A549 (cell line): ENCODE measurements at regions of chr12 and their contacts with region 1.

Region 1: GRCh38 chr12:52295663-52296062 is 4.3 kb upstream of the KRT81 start:
- DNase-seq: no peak
- ATAC-seq: no peak
- H3K4me3 ChIP-seq: no peak overlapping the region
- H3K27ac ChIP-seq: peak overlapping the region in 1 of 2 experiments; percentile 19; a peak in 1 of 6 replicates
- H3K4me1 ChIP-seq: peaks cover 28% of the 10 kb centered on the region
- CTCF ChIP-seq: no peak
- EP300 ChIP-seq: no peak
- POLR2A ChIP-seq: no peak
- RAD21 ChIP-seq: no peak

Region 2: DNA sequence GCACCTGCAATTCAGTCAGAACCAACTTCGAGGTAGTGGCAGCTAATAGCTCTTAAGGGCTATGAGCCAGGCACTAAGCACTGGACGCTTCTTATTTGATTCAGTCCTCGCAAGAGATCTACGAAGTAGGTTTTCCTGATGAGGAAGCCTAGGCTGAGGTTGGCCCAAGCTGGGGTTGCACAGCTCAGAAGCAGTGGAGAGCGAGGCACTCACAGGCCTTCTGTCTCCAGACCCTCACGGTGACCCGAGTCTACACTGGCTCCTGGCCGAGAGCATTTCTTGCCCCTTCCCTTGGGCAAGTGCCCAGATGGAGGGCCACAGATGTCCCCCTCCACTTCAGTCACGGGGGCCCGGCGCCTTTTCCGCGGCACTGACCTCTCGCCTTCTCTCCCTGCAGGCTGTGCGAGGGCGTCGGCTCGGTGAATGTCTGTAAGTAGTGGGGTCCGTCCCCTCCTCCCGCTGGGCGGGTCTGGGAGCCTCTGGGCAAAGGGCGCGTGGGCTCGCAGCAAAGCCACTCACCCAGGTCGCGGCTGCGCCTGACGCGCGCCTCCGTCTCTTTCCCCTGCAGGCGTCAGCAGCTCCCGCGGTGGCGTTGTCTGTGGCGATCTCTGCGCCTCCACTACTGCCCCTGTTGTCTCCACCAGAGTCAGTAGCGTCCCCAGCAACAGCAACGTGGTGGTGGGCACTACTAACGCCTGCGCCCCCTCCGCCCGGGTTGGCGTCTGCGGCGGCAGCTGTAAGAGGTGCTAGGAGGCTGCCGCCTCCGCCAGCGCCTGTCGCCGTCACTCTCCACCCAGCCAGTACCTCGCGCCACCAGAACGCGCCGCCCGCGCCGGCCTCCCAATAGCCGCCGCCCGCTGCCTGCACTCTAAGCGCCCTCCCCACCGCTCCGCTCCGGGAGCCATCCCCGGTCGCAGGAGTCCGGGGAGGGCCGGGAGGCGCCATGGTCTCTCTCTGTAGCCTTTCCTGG is 12.5 kb after region 1 on chr12:
- CTCF ChIA-PET with region 1: interaction called, 42 read pairs
- POLR2A ChIA-PET with region 1: no interaction called
- DNase-seq: peak in 1 of 2 experiments; percentile 49
- ATAC-seq: peak; percentile 55 to 77
- H3K4me3 ChIP-seq: no peak overlapping the region
- H3K27ac ChIP-seq: peak overlapping the region; percentile 60 to 87
- H3K4me1 ChIP-seq: peaks cover 6% of the 10 kb centered on the region; the same call in 1 of the 3 replicates
- CTCF ChIP-seq: no peak
- EP300 ChIP-seq: no peak
- POLR2A ChIP-seq: no peak
- RAD21 ChIP-seq: no peak

Region 3: GRCh38 chr12:52442600-52443061 is 147.0 kb after region 1 on chr12:
- CTCF ChIA-PET with region 1: no interaction called
- POLR2A ChIA-PET with region 1: no interaction called
- DNase-seq: peak; percentile 51 to 77
- ATAC-seq: peak; percentile 87 to 89
- H3K4me3 ChIP-seq: no peak overlapping the region
- H3K27ac ChIP-seq: peak overlapping the region; percentile 56 to 79
- H3K4me1 ChIP-seq: peaks cover 28% of the 10 kb centered on the region
- CTCF ChIP-seq: peak; percentile 35; the same call in 2 of the 3 replicates
- EP300 ChIP-seq: peak in 1 of 2 experiments; percentile 53; a peak in 1 of 5 replicates
- POLR2A ChIP-seq: no peak
- RAD21 ChIP-seq: peak; percentile 64 to 69